Motor neuron (in vitro differentiated cells): ENCODE measurements at regions of chr13 and their contacts with region 1.

Region 1: GRCh38 chr13:98653463-98653985 is 76.6 kb upstream of the STK24 start:
- ATAC-seq: peak; percentile 57 to 93 (median 84)
- H3K4me3 ChIP-seq: no peak overlapping the region
- H3K27ac ChIP-seq: no peak overlapping the region
- H3K4me1 ChIP-seq: no peaks in the 10 kb centered on the region

Region 2: DNA sequence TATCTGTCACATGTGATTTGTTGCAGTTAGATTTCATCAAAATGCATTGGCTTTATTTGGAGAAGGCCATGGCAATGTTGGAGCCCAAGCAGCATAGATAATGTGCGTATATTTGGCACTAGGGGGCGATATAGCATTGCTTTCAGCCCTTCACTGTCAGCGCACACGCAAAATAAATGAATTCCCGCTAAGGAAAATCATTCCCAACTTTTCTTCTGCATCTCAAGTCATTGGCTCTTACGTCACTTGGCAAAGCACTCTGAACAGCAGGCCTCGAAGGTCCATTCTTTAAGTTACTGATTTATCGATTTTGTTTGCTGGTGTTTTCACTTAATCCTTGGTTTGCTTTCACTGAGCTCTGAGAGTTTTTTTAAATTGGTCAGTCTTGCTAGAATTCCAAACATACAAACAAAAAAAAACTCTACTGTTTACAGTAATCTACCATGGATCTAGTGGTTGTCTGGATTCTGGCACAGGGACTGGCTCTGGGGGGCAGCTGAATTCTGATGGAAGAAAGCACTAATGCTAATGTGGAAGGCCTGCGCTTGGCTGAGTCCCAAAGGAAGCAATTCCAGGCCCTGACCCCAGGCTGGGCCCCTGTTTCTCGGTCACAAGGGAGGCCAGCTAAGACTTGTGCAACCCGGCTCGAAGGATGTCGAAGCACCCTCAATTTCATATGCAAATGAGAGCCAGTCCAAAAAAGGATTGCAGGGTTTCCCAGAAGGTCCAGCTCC is 797.8 kb before region 1 on chr13:
- in situ Hi-C with region 1: loop called in 3 of 9 experiments (anchors 25 kb)
- ATAC-seq: peak; percentile 91 to 96 (median 95)
- H3K4me3 ChIP-seq: no peak overlapping the region
- H3K27ac ChIP-seq: peak overlapping the region in 1 of 2 donors; percentile 42
- H3K4me1 ChIP-seq: peaks cover 9 to 11% of the 10 kb centered on the region in 2 donors

Region 3: DNA sequence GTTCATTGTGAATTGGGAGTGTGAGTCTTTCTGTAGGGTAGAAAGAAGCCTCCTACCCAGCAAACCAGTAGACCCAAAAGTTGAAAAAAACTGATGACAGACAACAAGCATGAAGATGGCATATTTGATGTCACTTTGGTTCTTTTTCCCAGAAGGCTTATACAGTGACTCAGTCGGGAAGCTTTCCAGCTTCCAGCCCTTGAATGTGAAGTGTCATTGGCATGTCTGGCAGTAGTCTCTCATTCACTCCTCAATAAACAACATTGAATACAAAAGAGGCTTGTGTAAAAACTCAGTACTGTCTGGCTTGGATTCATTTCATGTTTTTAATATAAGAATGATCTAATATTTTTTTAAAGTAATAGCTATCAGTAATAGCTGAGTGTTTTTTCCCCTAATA is 631.3 kb before region 1 on chr13:
- in situ Hi-C with region 1: loop called in 1 of 9 experiments (anchors 25 kb)
- ATAC-seq: peak in 5 of 8 experiments; percentile 15 to 84 (median 62)
- H3K4me3 ChIP-seq: no peak overlapping the region
- H3K27ac ChIP-seq: no peak overlapping the region
- H3K4me1 ChIP-seq: peaks cover 0 to 6% of the 10 kb centered on the region in 2 donors

Region 4: GRCh38 chr13:98466634-98467236 is 186.8 kb before region 1 on chr13:
- in situ Hi-C with region 1: loop called in 3 of 9 experiments (anchors 25 kb)
- ATAC-seq: peak in 4 of 8 experiments; percentile 55 to 90 (median 74)
- H3K4me3 ChIP-seq: no peak overlapping the region
- H3K27ac ChIP-seq: no peak overlapping the region
- H3K4me1 ChIP-seq: no peaks in the 10 kb centered on the region